ENCODE measurements at regions of chr5 and their contacts with region 1.

Region 1: GRCh38 chr5:139745800-139746690 is 49.6 kb upstream of the PSD2 start:
- DNase-seq: peak; percentile 60
- ATAC-seq: peak; percentile 16
- H3K4me3 Mint-ChIP-seq: peak overlapping the region; percentile 89
- H3K27ac Mint-ChIP-seq: peak overlapping the region; percentile 93
- H3K4me1 Mint-ChIP-seq: peaks cover 74% of the 10 kb centered on the region
- H3K27me3 Mint-ChIP-seq: no peaks in the 10 kb centered on the region
- CTCF ChIP-seq: no peak

Region 2: GRCh38 chr5:139301808-139302499 is 444.1 kb before region 1 on chr5:
- CTCF ChIA-PET with region 1: no interaction called
- POLR2A ChIA-PET with region 1: no interaction called
- intact Hi-C with region 1: no loop called
- DNase-seq: no peak
- ATAC-seq: no peak
- H3K4me3 Mint-ChIP-seq: peak overlapping the region; percentile 49
- H3K27ac Mint-ChIP-seq: peak overlapping the region; percentile 51
- H3K4me1 Mint-ChIP-seq: peaks cover 93% of the 10 kb centered on the region
- H3K27me3 Mint-ChIP-seq: no peaks in the 10 kb centered on the region
- CTCF ChIP-seq: no peak

Region 3: DNA sequence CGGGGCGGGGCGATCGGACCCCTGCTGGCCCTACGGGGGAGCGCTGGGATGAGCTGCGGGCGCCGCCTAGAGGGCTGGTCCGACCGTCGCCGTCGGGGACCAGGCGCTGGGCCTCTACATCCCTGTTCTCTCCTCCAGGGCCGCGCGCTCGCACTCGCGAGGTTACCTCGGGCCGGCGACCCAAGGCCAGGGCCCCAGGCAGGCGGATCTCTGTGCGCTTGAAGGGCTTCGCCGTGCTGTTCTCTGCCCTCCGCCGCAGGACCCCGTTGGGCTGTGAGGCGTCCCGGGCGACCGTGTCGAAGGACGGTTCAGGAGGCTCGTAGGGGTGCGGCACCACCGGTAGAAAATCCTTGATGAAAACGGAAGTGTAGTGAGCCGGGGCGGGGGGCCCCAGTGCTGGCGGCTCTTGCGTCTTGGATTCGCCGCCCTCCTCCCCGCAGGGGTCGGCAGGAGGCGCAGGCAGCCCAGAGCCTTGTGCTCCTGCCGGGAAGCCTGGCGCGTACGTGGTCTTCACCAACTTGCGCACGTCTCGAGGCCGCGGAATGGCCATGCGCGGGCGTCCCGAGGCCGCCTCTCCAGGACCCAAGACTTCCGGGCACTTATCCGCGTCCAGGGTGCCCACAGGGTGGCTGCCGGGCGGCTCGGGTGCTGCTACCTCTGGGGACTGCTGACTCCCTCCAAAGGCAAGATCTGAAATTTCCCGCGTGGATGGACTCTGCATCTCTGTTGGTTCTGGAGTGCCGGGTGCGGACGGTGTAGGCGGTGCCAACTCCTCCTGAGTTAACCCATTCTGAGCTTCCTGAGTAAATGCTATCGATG is 353.2 kb before region 1 on chr5:
- CTCF ChIA-PET with region 1: no interaction called
- POLR2A ChIA-PET with region 1: no interaction called
- intact Hi-C with region 1: loop called (anchors 5 kb)
- DNase-seq: peak; percentile 89
- ATAC-seq: peak; percentile 62
- H3K4me3 Mint-ChIP-seq: peak overlapping the region; percentile 94
- H3K27ac Mint-ChIP-seq: peak overlapping the region; percentile 86
- H3K4me1 Mint-ChIP-seq: peaks cover 39% of the 10 kb centered on the region
- H3K27me3 Mint-ChIP-seq: no peaks in the 10 kb centered on the region
- CTCF ChIP-seq: no peak

Region 4: DNA sequence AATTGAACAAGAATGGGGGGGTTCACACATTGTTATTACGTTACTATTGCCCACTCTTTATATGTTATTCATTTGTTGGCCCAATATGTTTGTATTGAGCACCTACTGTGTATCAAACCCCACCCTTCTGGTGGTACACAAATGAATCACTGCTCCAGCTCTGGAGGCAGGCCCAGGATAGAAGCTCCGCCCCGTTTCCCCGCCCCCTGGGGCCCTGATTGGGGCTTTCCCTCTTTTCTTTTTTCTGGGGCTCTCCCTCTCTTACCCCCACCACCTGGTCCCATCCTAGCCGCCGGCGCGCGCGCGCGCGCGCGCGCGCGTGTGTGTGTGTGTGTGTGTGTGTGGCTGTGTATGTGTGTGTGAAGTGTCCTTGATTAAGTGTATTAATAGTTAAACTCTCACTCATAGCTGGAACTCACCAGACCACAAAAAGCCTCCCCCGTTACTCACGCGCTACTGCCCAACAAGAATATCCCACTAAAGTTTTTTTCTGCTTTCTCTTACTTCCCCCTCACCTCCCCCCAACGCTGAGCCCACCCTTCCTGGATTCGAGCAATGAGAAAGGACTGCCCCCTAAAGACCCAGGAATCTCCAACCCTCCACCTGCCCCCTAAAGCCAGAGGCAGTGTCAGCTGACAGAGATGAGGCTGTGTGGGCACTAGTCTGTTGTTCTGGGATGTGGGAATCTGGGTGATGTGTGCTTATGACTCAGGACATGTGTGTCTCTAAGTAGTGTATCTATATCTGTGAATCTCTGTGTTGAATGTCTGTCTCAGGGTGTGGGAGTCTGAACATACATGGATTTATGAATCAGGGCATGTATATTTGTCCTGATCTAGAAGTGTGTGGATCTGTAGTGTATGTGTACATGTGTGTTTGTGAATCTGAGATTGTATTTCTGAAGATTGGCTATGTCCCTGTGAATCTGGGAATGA is 93.9 kb before region 1 on chr5:
- CTCF ChIA-PET with region 1: interaction called, 4 read pairs
- POLR2A ChIA-PET with region 1: interaction called, 26 read pairs
- intact Hi-C with region 1: loop called (anchors 2 kb)
- DNase-seq: peak; percentile 91
- ATAC-seq: peak; percentile 56
- H3K4me3 Mint-ChIP-seq: peak overlapping the region; percentile 98
- H3K27ac Mint-ChIP-seq: peak overlapping the region; percentile 85
- H3K4me1 Mint-ChIP-seq: peaks cover 76% of the 10 kb centered on the region
- H3K27me3 Mint-ChIP-seq: no peaks in the 10 kb centered on the region
- CTCF ChIP-seq: no peak

Region 5: GRCh38 chr5:139670369-139671095 is 75.5 kb before region 1 on chr5:
- CTCF ChIA-PET with region 1: interaction called, 5 read pairs
- POLR2A ChIA-PET with region 1: interaction called, 33 read pairs
- intact Hi-C with region 1: loop called (anchors 1 kb)
- DNase-seq: peak; percentile 65
- ATAC-seq: peak; percentile 61
- H3K4me3 Mint-ChIP-seq: peak overlapping the region; percentile 86
- H3K27ac Mint-ChIP-seq: peak overlapping the region; percentile 92
- H3K4me1 Mint-ChIP-seq: peaks cover 92% of the 10 kb centered on the region
- H3K27me3 Mint-ChIP-seq: no peaks in the 10 kb centered on the region
- CTCF ChIP-seq: no peak

Region 6: GRCh38 chr5:139711067-139711905 is 34.8 kb before region 1 on chr5:
- CTCF ChIA-PET with region 1: interaction called, 7 read pairs
- POLR2A ChIA-PET with region 1: interaction called, 71 read pairs
- intact Hi-C with region 1: loop called (anchors 1 kb)
- DNase-seq: no peak
- ATAC-seq: peak; percentile 45
- H3K4me3 Mint-ChIP-seq: peak overlapping the region; percentile 82
- H3K27ac Mint-ChIP-seq: peak overlapping the region; percentile 46
- H3K4me1 Mint-ChIP-seq: peaks cover 30% of the 10 kb centered on the region
- H3K27me3 Mint-ChIP-seq: no peaks in the 10 kb centered on the region
- CTCF ChIP-seq: no peak

Region 7: DNA sequence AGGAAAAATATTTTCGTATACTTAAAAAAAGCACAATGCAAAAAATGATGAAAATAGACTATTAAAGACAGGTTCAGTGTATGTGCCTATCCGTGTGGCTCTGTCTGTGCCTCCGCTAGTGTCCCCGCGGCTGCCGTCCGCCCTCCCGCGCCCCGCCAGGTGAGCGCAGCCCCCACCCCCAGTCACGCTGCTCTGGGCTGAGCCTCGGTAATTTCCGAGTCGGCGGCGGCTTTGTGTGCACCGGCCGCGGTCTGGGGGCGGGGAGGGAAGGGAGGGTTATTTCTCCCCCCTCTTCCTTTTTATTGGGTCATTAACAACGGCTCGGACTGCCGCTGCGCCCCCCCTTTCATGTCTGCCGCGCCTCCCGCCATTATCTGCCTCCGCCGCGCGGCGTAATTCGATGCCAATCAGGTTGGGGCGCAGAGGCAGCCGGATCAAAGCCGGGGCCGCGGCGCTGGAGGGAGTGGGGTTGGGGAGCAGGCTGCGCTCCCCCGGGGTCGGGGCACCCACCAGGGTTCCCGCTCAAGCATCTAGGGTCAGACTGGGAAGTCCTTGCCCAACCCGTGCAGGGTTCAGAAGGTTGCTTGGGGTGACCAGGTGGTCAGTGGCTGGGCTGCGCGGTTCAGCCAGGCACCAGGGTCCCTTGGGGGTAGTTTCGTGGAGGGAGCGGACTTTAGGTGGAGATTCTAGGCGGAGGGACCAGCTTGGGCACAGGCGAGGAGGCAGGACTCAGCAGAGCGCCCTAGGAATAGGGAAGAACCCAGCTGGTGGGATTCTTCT is 10.0 kb after region 1 on chr5:
- CTCF ChIA-PET with region 1: no interaction called
- POLR2A ChIA-PET with region 1: interaction called, 7 read pairs
- intact Hi-C with region 1: loop called (anchors 1 kb)
- DNase-seq: peak; percentile 49
- ATAC-seq: peak; percentile 72
- H3K4me3 Mint-ChIP-seq: peak overlapping the region; percentile 62
- H3K27ac Mint-ChIP-seq: no peak overlapping the region
- H3K4me1 Mint-ChIP-seq: peaks cover 60% of the 10 kb centered on the region
- H3K27me3 Mint-ChIP-seq: peaks cover 10% of the 10 kb centered on the region
- CTCF ChIP-seq: no peak